CD8-positive, alpha-beta memory T cell (primary cell): ENCODE measurements at regions of chr11 and their contacts with region 1.

Region 1: GRCh38 chr11:47152953-47153950 is 23.4 kb downstream of the ARFGAP2 start:
- DNase-seq: peak; percentile 19 to 60 (median 30)
- H3K4me3 ChIP-seq: peak overlapping the region; percentile 2
- H3K4me3 Mint-ChIP-seq: peak overlapping the region; percentile 27 to 76 (median 65)
- H3K27ac ChIP-seq: no peak overlapping the region
- H3K27ac Mint-ChIP-seq: peak overlapping the region; percentile 43 to 94 (median 87)
- H3K4me1 ChIP-seq: peaks cover 38% of the 10 kb centered on the region
- H3K4me1 Mint-ChIP-seq: peaks cover 28 to 32% (median 32%) of the 10 kb centered on the region in 3 donors
- H3K27me3 ChIP-seq: no peaks in the 10 kb centered on the region
- H3K27me3 Mint-ChIP-seq: no peaks in the 10 kb centered on the region

Region 2: DNA sequence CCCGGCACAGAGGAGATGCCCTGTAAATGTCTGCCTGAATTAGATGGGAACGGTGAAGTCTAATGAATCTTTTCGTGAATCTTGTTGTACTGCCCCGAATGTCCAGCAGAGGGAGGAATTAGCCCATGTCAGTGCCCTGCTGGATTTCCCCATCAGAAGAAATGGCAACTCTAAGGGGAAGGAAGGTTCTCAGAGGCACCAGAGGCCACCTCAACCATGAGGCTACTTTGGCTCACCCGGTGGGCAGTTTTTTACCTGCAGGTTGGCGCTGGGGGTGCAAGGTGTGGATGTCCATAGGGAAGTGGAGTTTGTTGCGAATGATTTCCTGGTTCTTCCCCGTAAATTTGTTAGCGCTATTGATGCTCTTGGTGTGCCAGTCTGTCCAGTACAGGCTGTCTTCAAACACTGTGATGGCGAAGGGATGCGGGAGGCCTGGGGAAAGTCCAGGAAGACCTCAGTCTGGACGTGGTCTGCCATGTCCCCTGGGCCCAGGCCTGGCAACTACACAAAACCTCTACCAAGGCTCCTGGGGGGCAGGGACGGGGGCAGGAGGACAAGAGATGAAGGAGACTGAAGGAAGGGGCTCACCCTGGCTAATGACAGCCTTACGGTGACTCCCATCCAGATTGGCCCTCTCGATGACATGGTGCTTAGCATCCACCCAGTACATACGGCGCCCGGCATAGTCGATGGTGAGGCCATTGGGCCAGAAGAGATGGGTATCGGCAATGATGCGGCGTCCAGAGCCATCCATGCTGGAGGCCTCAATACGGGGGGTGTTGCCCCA is 263.4 kb before region 1 on chr11:
- CTCF ChIA-PET with region 1: interaction called, 17 read pairs
- POLR2A ChIA-PET with region 1: interaction called, 4 read pairs
- DNase-seq: peak; percentile 55 to 76 (median 61)
- H3K4me3 ChIP-seq: no peak overlapping the region
- H3K4me3 Mint-ChIP-seq: no peak overlapping the region
- H3K27ac ChIP-seq: no peak overlapping the region
- H3K27ac Mint-ChIP-seq: no peak overlapping the region
- H3K4me1 ChIP-seq: no peaks in the 10 kb centered on the region
- H3K4me1 Mint-ChIP-seq: peaks cover 0 to 3% (median 0%) of the 10 kb centered on the region in 3 donors
- H3K27me3 ChIP-seq: no peaks in the 10 kb centered on the region
- H3K27me3 Mint-ChIP-seq: peaks cover 4 to 5% of the 10 kb centered on the region in 2 donors

Region 3: GRCh38 chr11:47020793-47021526 is 132.3 kb before region 1 on chr11:
- CTCF ChIA-PET with region 1: no interaction called
- POLR2A ChIA-PET with region 1: no interaction called
- DNase-seq: no peak
- H3K4me3 ChIP-seq: no peak overlapping the region
- H3K4me3 Mint-ChIP-seq: no peak overlapping the region
- H3K27ac ChIP-seq: no peak overlapping the region
- H3K27ac Mint-ChIP-seq: no peak overlapping the region
- H3K4me1 ChIP-seq: no peaks in the 10 kb centered on the region
- H3K4me1 Mint-ChIP-seq: no peaks in the 10 kb centered on the region
- H3K27me3 ChIP-seq: no peaks in the 10 kb centered on the region
- H3K27me3 Mint-ChIP-seq: no peaks in the 10 kb centered on the region

Region 4: DNA sequence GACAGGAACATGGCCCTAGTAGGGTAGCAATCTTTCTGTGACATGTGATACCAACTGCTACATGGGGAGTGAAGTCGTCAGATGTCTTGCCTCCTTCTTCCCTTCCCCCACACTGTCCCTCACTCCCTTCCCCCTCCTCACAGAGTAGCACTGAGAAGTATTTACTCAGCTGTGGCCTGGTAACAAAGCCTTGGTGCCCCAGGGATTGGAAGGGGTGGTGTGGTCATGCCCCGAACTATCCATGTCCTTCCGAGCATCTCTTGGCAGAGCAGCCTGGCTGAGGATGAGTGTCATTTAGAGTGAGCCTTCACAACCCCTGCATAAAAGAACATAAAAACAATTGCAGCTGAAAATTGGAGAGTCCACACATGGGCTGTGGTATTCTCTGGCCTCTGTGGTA is 22.7 kb before region 1 on chr11:
- CTCF ChIA-PET with region 1: interaction called, 25 read pairs
- POLR2A ChIA-PET with region 1: no interaction called
- DNase-seq: no peak
- H3K4me3 ChIP-seq: no peak overlapping the region
- H3K4me3 Mint-ChIP-seq: no peak overlapping the region
- H3K27ac ChIP-seq: no peak overlapping the region
- H3K27ac Mint-ChIP-seq: no peak overlapping the region
- H3K4me1 ChIP-seq: no peaks in the 10 kb centered on the region
- H3K4me1 Mint-ChIP-seq: no peaks in the 10 kb centered on the region
- H3K27me3 ChIP-seq: no peaks in the 10 kb centered on the region
- H3K27me3 Mint-ChIP-seq: no peaks in the 10 kb centered on the region